PC-9 (cell line): ENCODE measurements at regions of chr14 and their contacts with region 1.

Region 1: GRCh38 chr14:24734878-24735500 is 101.0 kb upstream of the GZMB start:
- DNase-seq: peak; percentile 8 to 40
- H3K4me3 ChIP-seq: no peak overlapping the region
- H3K27ac ChIP-seq: no peak overlapping the region
- H3K4me1 ChIP-seq: no peaks in the 10 kb centered on the region
- H3K27me3 ChIP-seq: no peaks in the 10 kb centered on the region
- CTCF ChIP-seq: peak; percentile 68

Region 2: GRCh38 chr14:24339284-24340151 is 395.5 kb before region 1 on chr14 and contains the start of gene RIPK3:
- CTCF ChIA-PET with region 1: no interaction called
- POLR2A ChIA-PET with region 1: no interaction called
- intact Hi-C with region 1: no loop called
- DNase-seq: peak in 1 of 2 experiments; percentile 30
- H3K4me3 ChIP-seq: no peak within 1 kb of the TSS
- H3K27ac ChIP-seq: no peak within 1 kb of the TSS
- H3K4me1 ChIP-seq: no peaks in the 10 kb centered on the region; the same call in 1 of the 2 replicates
- H3K27me3 ChIP-seq: no peaks in the 10 kb centered on the region
- CTCF ChIP-seq: no peak
- total RNA-seq, gene RIPK3: 4.0 and 6.4 TPM in 2 replicates

Region 3: DNA sequence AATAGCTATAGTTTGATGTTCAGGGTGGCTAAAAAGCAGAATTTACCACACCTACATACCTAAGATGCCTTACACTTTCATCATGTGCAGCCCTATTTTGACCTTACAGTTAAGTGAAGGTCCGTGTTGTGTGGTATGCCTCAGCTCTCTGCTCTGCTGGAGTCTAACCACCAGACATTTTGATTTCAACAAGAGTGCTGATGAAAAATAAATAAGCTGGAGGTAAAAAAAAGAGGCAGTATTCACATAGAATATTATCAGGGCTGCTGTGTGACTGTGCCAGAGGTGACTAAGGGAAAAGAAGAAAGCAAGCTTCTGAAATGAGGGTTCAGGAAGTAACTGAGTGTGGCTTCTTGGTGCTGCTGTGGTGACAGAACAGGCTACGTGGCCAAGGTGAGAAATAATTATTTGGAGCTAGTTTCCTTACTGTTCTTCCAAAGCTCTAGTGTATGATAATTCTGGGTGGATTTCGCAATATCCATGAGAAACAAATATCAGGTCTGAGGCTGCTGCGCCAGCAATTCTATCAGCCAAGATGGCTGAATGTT is 126.2 kb after region 1 on chr14:
- CTCF ChIA-PET with region 1: no interaction called
- POLR2A ChIA-PET with region 1: no interaction called
- intact Hi-C with region 1: no loop called
- DNase-seq: peak; percentile 42 to 87
- H3K4me3 ChIP-seq: peak overlapping the region; percentile 46; the same call in 1 of the 2 replicates
- H3K27ac ChIP-seq: peak overlapping the region; percentile 80
- H3K4me1 ChIP-seq: peaks cover 15% of the 10 kb centered on the region
- H3K27me3 ChIP-seq: no peaks in the 10 kb centered on the region
- CTCF ChIP-seq: no peak

Region 4: DNA sequence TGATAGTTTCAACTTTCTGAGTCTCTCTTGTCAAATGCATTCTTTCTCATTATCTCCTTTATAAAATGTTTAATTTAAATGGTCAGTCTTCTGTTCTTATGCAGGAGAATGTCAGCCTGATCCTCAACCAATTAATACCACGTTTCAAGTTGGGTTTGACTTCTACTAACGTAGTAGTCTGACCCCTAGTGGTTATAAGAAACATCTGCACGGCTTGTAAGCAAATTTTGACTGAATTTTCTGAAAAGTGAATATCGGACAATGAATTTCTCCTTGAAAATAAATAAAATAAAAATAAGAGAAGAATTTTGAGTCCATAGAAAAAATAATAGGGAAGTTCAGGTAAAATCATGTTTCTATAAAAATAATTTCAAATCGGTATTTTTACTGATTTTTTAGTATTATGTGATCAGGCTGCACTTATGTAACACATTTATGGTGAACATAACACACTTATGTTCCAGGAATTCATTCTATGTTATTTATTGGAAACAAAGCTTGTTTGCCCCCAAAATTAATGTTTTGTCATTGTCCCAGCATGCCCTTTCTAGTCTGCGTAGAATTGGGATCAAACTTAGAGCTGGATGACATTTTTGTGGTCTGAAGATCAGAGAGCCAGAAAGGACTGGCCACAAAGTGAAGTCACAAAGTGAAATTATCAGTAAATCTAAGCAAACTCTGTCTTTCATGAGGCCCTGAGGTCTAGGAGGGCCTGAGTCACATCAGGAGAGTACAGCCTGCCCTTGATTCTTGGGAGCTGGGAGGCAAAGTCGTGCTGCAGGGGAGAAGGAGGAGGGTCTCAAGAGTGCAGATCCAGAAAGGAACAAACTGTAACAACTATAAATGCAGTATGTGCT is 416.2 kb after region 1 on chr14:
- CTCF ChIA-PET with region 1: no interaction called
- POLR2A ChIA-PET with region 1: no interaction called
- intact Hi-C with region 1: loop called (anchors 10 kb)
- DNase-seq: peak in 1 of 2 experiments; percentile 38
- H3K4me3 ChIP-seq: no peak overlapping the region
- H3K27ac ChIP-seq: no peak overlapping the region
- H3K4me1 ChIP-seq: no peaks in the 10 kb centered on the region
- H3K27me3 ChIP-seq: no peaks in the 10 kb centered on the region
- CTCF ChIP-seq: peak; percentile 78

Region 5: GRCh38 chr14:25237845-25238244 is 502.9 kb after region 1 on chr14:
- CTCF ChIA-PET with region 1: no interaction called
- POLR2A ChIA-PET with region 1: no interaction called
- intact Hi-C with region 1: loop called (anchors 1 kb)
- DNase-seq: peak in 1 of 2 experiments; percentile 8
- H3K4me3 ChIP-seq: no peak overlapping the region
- H3K27ac ChIP-seq: no peak overlapping the region
- H3K4me1 ChIP-seq: no peaks in the 10 kb centered on the region
- H3K27me3 ChIP-seq: no peaks in the 10 kb centered on the region
- CTCF ChIP-seq: no peak

Region 6: DNA sequence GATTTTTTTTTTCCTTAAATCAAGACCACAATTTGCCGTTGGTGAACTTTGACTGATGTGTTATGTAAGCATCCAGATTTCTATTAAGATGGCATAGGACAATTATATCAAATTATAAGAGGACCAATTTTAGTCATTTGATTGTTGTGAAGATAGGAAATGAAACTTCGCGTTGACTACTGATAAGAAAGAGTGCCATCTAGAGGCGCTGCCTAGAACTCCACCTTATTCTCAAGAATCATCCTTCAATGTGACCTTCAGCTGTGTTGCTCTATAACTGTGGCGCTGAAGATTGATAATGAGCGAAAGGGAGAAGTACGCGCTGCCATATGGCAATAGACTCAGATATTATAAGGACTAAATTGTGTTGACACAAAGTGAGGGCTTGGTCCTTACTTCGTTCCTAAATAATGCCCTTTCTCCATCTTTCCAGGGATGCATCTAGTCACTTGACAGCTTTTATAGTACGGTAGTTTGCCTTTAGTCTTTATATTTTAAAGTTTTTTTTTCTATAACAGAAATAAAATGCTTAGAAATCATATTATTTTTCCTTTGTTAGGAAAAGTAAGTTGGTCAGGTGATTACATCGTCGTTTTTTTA is 665.7 kb after region 1 on chr14:
- CTCF ChIA-PET with region 1: no interaction called
- POLR2A ChIA-PET with region 1: no interaction called
- intact Hi-C with region 1: loop called (anchors 1 kb)
- DNase-seq: peak; percentile 16 to 40
- H3K4me3 ChIP-seq: no peak overlapping the region
- H3K27ac ChIP-seq: no peak overlapping the region
- H3K4me1 ChIP-seq: no peaks in the 10 kb centered on the region
- H3K27me3 ChIP-seq: no peaks in the 10 kb centered on the region
- CTCF ChIP-seq: peak; percentile 68